ENCODE measurements at regions of chr1 and their contacts with region 1.

Region 1: DNA sequence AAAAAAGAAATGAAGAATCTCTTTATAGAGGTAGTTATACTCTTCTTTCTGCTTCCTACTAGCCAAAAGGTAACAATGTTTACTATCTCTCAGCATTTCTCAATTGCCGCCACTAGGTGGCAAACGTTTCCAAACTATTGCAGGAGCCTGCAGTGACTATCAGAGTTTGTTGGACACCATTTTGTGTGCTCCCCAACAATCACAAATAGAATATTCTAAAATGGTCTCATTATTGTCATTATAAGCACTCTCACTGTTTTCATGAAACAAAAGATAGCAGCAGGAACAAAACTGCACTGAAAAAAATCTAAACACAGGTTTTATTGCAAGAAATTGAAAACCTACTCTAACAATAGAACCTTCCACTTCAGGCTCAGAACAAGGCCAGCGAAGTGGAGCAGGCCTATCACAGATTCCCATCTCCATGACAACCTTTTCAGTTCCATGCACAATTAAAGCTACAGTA is 83.9 kb upstream of the PLPPR4 start:
- DNase-seq: peak; percentile 83
- H3K4me3 Mint-ChIP-seq: no peak overlapping the region
- H3K27ac Mint-ChIP-seq: no peak overlapping the region
- H3K4me1 Mint-ChIP-seq: no peaks in the 10 kb centered on the region
- H3K27me3 Mint-ChIP-seq: no peaks in the 10 kb centered on the region

Region 2: GRCh38 chr1:98749152-98749756 is 431.1 kb before region 1 on chr1:
- CTCF ChIA-PET with region 1: interaction called, 3 read pairs
- intact Hi-C with region 1: loop called (anchors 5 kb)
- DNase-seq: no peak
- H3K4me3 Mint-ChIP-seq: no peak overlapping the region
- H3K27ac Mint-ChIP-seq: no peak overlapping the region
- H3K4me1 Mint-ChIP-seq: no peaks in the 10 kb centered on the region
- H3K27me3 Mint-ChIP-seq: no peaks in the 10 kb centered on the region

Region 3: GRCh38 chr1:99133756-99134500 is 46.4 kb before region 1 on chr1:
- CTCF ChIA-PET with region 1: no interaction called
- intact Hi-C with region 1: no loop called
- DNase-seq: no peak
- H3K4me3 Mint-ChIP-seq: no peak overlapping the region
- H3K27ac Mint-ChIP-seq: no peak overlapping the region
- H3K4me1 Mint-ChIP-seq: no peaks in the 10 kb centered on the region
- H3K27me3 Mint-ChIP-seq: peaks cover 4% of the 10 kb centered on the region

Region 4: DNA sequence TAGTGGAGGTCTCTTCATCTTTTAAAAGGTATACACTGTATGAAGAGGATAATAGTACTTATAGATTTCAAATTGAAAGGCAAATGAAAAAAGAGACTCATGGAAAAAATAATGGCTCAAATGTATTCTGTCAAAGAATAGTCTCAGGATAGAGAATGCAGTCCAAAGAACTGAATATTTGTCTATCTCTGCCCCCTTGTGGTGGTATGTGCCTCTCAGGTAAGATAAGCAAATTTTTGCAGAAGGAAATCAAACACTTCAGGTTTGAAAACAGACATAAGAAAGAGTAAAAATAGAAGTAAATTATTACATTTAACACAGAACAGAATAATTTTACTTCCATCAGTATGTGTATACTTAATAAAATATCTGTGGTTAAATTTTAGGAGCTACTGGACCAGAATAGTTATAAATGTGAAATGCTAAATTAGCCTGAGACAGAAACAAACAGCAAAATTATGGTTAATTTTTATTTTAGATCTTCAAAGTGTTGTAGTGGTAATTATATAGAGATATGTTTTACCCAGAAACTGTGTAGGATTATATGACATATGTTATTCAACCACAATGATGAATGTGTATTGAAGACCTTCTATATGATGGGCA is 301.1 kb after region 1 on chr1:
- CTCF ChIA-PET with region 1: interaction called, 46 read pairs
- intact Hi-C with region 1: loop called (anchors 1 kb)
- DNase-seq: peak; percentile 57
- H3K4me3 Mint-ChIP-seq: no peak overlapping the region
- H3K27ac Mint-ChIP-seq: no peak overlapping the region
- H3K4me1 Mint-ChIP-seq: no peaks in the 10 kb centered on the region
- H3K27me3 Mint-ChIP-seq: peaks cover 21% of the 10 kb centered on the region

Region 5: GRCh38 chr1:99526926-99527477 is 346.6 kb after region 1 on chr1:
- CTCF ChIA-PET with region 1: no interaction called
- intact Hi-C with region 1: loop called (anchors 5 kb)
- DNase-seq: no peak
- H3K4me3 Mint-ChIP-seq: no peak overlapping the region
- H3K27ac Mint-ChIP-seq: no peak overlapping the region
- H3K4me1 Mint-ChIP-seq: no peaks in the 10 kb centered on the region
- H3K27me3 Mint-ChIP-seq: peaks cover 7% of the 10 kb centered on the region

Region 6: GRCh38 chr1:99685516-99686180 is 505.3 kb after region 1 on chr1:
- CTCF ChIA-PET with region 1: interaction called, 5 read pairs
- intact Hi-C with region 1: loop called (anchors 1 kb)
- DNase-seq: peak; percentile 69
- H3K4me3 Mint-ChIP-seq: no peak overlapping the region
- H3K27ac Mint-ChIP-seq: no peak overlapping the region
- H3K4me1 Mint-ChIP-seq: no peaks in the 10 kb centered on the region
- H3K27me3 Mint-ChIP-seq: peaks cover 4% of the 10 kb centered on the region

Region 7: GRCh38 chr1:99707535-99708142 is 527.3 kb after region 1 on chr1:
- CTCF ChIA-PET with region 1: interaction called, 3 read pairs
- intact Hi-C with region 1: loop called (anchors 1 kb)
- DNase-seq: peak; percentile 81
- H3K4me3 Mint-ChIP-seq: no peak overlapping the region
- H3K27ac Mint-ChIP-seq: no peak overlapping the region
- H3K4me1 Mint-ChIP-seq: peaks cover 2% of the 10 kb centered on the region
- H3K27me3 Mint-ChIP-seq: peaks cover 2% of the 10 kb centered on the region